Ascending aorta (tissue), 2 donors: ENCODE measurements at regions of chr3 and their contacts with region 1.

Region 1: GRCh38 chr3:63961891-63962290 is 49.7 kb upstream of the SCAANT1 start:
- DNase-seq: no peak
- H3K4me3 ChIP-seq: no peak overlapping the region
- H3K27ac ChIP-seq: no peak overlapping the region
- H3K4me1 ChIP-seq: peaks cover 3 to 27% of the 10 kb centered on the region in 2 donors
- H3K27me3 ChIP-seq: no peaks in the 10 kb centered on the region
- CTCF ChIP-seq: peak; percentile 37 to 58 (median 42)

Region 2: GRCh38 chr3:63975723-63976122 is 13.8 kb after region 1 on chr3:
- intact Hi-C with region 1: loop called (anchors 1 kb)
- DNase-seq: no peak
- H3K4me3 ChIP-seq: no peak overlapping the region
- H3K27ac ChIP-seq: no peak overlapping the region
- H3K4me1 ChIP-seq: peaks cover 3 to 21% of the 10 kb centered on the region in 2 donors
- H3K27me3 ChIP-seq: no peaks in the 10 kb centered on the region
- CTCF ChIP-seq: no peak

Region 3: GRCh38 chr3:64023187-64023848 is 61.4 kb after region 1 on chr3 and contains the start of gene PSMD6:
- intact Hi-C with region 1: loop called (anchors 2 kb)
- DNase-seq: peak in 1 of 2 donors; percentile 93
- H3K4me3 ChIP-seq: peak within 1 kb of the TSS; percentile 86 to 95
- H3K27ac ChIP-seq: peak within 1 kb of the TSS; percentile 83 to 85
- H3K4me1 ChIP-seq: peaks cover 6 to 19% of the 10 kb centered on the region in 2 donors
- H3K27me3 ChIP-seq: no peaks in the 10 kb centered on the region
- CTCF ChIP-seq: peak; percentile 98 to 100 (median 99)
- total RNA-seq, gene PSMD6: 49.2 TPM